ENCODE measurements at regions of chr7 and their contacts with region 1.

Region 1: GRCh38 chr7:147279964-147280374 is 1163.4 kb downstream of the CNTNAP2 start:
- DNase-seq: no peak

Region 2: DNA sequence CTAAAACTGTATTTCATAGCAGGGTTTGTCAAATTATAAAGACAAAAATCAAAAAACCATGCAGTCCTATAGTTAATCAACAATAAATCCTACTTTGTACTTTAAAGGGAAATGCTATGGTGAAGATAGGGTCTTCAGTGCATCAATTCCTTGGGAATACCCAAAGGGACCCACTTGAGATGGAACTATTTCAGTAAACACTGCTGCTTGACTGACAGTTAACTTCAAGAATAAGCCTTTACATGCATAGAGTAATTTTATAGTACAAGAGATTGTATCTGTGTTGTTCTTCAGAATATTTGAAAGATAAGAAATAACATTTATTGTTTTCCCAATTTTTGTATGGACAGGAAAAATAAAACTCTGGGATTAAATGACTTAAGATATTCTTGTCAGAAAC is 16.2 kb after region 1 on chr7:
- intact Hi-C with region 1: no loop called
- DNase-seq: no peak

Region 3: GRCh38 chr7:147363101-147363500 is 83.1 kb after region 1 on chr7:
- intact Hi-C with region 1: loop called in 1 of 2 experiments (anchors 5 kb)
- DNase-seq: no peak

Region 4: DNA sequence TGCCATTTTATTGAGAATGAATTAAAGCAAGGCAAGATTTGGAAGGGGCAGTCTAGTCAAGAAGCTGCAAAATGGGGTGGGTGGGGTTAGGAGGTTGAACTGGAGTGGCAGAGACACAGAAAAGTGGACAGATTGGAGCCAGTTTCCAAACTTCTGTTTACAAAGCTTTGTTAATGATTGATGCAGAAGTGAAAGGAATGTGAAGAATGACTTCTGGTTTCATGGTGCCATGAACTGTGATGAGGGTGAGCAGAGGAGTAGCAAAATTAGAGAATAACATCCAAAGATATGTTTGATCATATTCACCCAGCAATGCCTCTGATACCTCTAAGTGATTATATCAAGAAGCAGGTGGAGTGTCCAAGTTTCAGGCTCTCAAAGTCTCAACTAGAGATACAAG is 192.6 kb after region 1 on chr7:
- intact Hi-C with region 1: no loop called
- DNase-seq: no peak

Measured in posterior vena cava (tissue), 2 donors.